AG04449 (cell line): ENCODE measurements at regions of chr15 and their contacts with region 1.

Region 1: DNA sequence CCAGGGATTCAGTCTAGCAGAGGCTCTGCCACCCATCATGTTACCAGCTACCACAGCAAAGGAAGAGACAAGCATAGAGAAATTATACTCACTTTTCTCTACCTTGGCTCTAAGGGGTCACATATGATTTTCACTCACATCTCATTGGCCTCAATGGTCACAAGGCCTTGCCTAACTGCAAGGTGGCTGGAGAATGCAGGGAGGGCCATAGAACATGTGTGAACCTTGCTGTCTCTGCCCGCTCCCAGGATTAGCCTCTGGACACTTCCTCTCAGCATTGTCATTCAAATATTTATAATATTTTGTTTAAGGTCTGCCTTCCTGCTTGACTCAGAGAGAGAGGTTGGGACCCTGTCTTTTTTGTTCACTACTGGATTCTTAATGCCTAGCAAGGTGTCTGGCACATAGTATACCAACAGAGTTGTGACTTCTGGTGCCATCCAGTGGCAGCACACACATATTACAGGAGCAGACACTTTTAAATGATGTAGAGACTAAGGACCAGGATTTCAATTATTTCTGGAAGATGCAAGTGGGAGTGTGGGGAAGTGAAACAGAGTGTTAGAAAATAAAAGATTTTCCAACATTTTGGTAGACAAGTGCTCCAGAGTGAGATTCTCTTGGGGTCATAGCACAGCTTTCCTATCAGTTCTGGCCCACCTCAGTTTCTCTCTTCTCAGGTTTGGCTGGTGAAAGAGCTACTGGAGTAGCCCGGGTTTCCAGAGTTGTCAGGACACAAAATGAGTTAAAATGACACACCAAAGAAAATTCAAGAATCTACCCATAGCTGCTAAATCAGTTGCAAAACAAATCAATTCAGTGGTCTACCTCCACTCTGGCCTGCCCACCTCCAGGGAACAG is 119.0 kb upstream of the RASGRP1 start:
- DNase-seq: no peak
- H3K4me3 ChIP-seq: no peak overlapping the region
- CTCF ChIP-seq: peak; percentile 65

Region 2: GRCh38 chr15:38490242-38490922 is 193.2 kb before region 1 on chr15:
- CTCF ChIA-PET with region 1: interaction called, 10 read pairs
- POLR2A ChIA-PET with region 1: interaction called, 3 read pairs
- DNase-seq: peak; percentile 80
- H3K4me3 ChIP-seq: no peak overlapping the region
- CTCF ChIP-seq: no peak

Region 3: GRCh38 chr15:38671675-38672254 is 11.8 kb before region 1 on chr15:
- CTCF ChIA-PET with region 1: interaction called, 37 read pairs
- POLR2A ChIA-PET with region 1: no interaction called
- DNase-seq: no peak
- H3K4me3 ChIP-seq: no peak overlapping the region
- CTCF ChIP-seq: no peak

Region 4: GRCh38 chr15:38699633-38700230 is 16.1 kb after region 1 on chr15:
- CTCF ChIA-PET with region 1: interaction called, 227 read pairs
- POLR2A ChIA-PET with region 1: interaction called, 5 read pairs
- DNase-seq: no peak
- H3K4me3 ChIP-seq: no peak overlapping the region
- CTCF ChIP-seq: peak; percentile 79